ENCODE measurements at regions of chr17 and their contacts with region 1.

Region 1: GRCh38 chr17:879549-880442 is 97.6 kb downstream of the MRM3 start:
- DNase-seq: peak; percentile 85
- H3K4me3 ChIP-seq: peak overlapping the region in 1 of 3 experiments; percentile 56
- H3K27ac ChIP-seq: peak overlapping the region; percentile 95
- H3K4me1 ChIP-seq: peaks cover 23% of the 10 kb centered on the region
- H3K27me3 ChIP-seq: no peaks in the 10 kb centered on the region
- CTCF ChIP-seq: peak; percentile 68 to 75
- POLR2A ChIP-seq: no peak

Region 2: GRCh38 chr17:846901-847843 is 32.6 kb before region 1 on chr17:
- CTCF ChIA-PET with region 1: interaction called, 18 read pairs
- POLR2A ChIA-PET with region 1: no interaction called
- dilution Hi-C with region 1: no loop called
- intact Hi-C with region 1: no loop called
- DNase-seq: peak; percentile 79
- H3K4me3 ChIP-seq: peak overlapping the region; percentile 25 to 68 (median 36)
- H3K27ac ChIP-seq: peak overlapping the region; percentile 32
- H3K4me1 ChIP-seq: peaks cover 26% of the 10 kb centered on the region
- H3K27me3 ChIP-seq: peaks cover 0 to 3% of the 10 kb centered on the region in 2 experiments
- CTCF ChIP-seq: no peak
- POLR2A ChIP-seq: no peak

Region 3: GRCh38 chr17:903981-904481 is 24.2 kb after region 1 on chr17:
- CTCF ChIA-PET with region 1: interaction called, 21 read pairs
- POLR2A ChIA-PET with region 1: no interaction called
- dilution Hi-C with region 1: no loop called
- intact Hi-C with region 1: no loop called
- DNase-seq: peak; percentile 77
- H3K4me3 ChIP-seq: no peak overlapping the region
- H3K27ac ChIP-seq: peak overlapping the region; percentile 22
- H3K4me1 ChIP-seq: peaks cover 9% of the 10 kb centered on the region
- H3K27me3 ChIP-seq: no peaks in the 10 kb centered on the region
- CTCF ChIP-seq: no peak
- POLR2A ChIP-seq: no peak

Region 4: GRCh38 chr17:915538-916201 is 35.9 kb after region 1 on chr17:
- CTCF ChIA-PET with region 1: interaction called, 11 read pairs
- POLR2A ChIA-PET with region 1: no interaction called
- dilution Hi-C with region 1: no loop called
- intact Hi-C with region 1: loop called (anchors 1 kb)
- DNase-seq: peak; percentile 94
- H3K4me3 ChIP-seq: peak overlapping the region in 1 of 3 experiments; percentile 0
- H3K27ac ChIP-seq: peak overlapping the region; percentile 79
- H3K4me1 ChIP-seq: peaks cover 31% of the 10 kb centered on the region
- H3K27me3 ChIP-seq: no peaks in the 10 kb centered on the region
- CTCF ChIP-seq: no peak
- POLR2A ChIP-seq: no peak

Region 5: DNA sequence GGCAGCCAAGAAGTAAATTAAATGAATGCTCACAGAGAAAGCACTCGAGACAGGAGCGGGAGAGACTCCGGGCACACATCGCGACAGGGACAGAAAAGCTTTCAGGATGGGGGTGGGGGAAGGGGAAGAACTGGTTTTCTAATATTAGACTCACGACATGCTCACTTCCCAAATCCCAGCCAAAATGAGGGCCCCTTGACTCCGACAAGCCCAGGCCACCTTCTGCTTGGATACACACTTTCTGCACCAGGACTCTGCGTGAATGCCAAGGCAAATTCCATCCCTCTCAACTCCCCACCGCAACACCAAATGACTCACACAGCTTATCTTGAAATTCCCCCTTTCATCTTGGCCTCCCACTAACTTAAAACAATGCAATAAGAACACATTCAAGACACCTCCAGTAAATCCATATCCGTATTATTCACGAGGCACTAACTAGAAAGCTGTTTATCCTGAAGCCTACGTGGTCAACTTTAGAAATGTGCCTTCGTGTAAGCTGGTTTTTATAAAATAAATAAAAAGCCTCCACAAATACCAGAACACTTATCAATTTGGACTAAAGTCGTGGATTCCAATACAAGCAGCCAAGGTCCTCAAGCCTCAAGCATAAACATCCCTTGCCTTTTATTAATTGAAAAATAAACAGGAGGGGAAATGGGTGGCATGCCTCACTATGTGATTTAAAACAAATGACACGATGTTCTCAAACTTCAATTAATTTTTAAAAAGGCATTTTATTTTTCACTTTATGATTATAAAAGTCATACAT is 53.7 kb after region 1 on chr17:
- CTCF ChIA-PET with region 1: interaction called, 27 read pairs
- POLR2A ChIA-PET with region 1: no interaction called
- dilution Hi-C with region 1: no loop called
- intact Hi-C with region 1: loop called (anchors 1 kb)
- DNase-seq: peak; percentile 94
- H3K4me3 ChIP-seq: peak overlapping the region in 1 of 3 experiments; percentile 39
- H3K27ac ChIP-seq: peak overlapping the region; percentile 81
- H3K4me1 ChIP-seq: peaks cover 11% of the 10 kb centered on the region
- H3K27me3 ChIP-seq: no peaks in the 10 kb centered on the region
- CTCF ChIP-seq: no peak
- POLR2A ChIP-seq: peak; percentile 17

Region 6: GRCh38 chr17:979538-980405 is 100.0 kb after region 1 on chr17 and contains the start of gene NXN:
- CTCF ChIA-PET with region 1: interaction called, 224 read pairs
- POLR2A ChIA-PET with region 1: interaction called, 3 read pairs
- dilution Hi-C with region 1: no loop called
- intact Hi-C with region 1: loop called (anchors 1 kb)
- DNase-seq: peak; percentile 80
- H3K4me3 ChIP-seq: peak within 1 kb of the TSS; percentile 84 to 93 (median 91)
- H3K27ac ChIP-seq: no peak within 1 kb of the TSS
- H3K4me1 ChIP-seq: peaks cover 21% of the 10 kb centered on the region
- H3K27me3 ChIP-seq: no peaks in the 10 kb centered on the region
- CTCF ChIP-seq: peak in 1 of 2 donors; percentile 45
- POLR2A ChIP-seq: peak; percentile 82
- total RNA-seq, gene NXN: 58.9 and 77.3 TPM in 2 replicates

Measured in endothelial cell of umbilical vein (primary cell).